ENCODE measurements at regions of chr16 and their contacts with region 1.

Region 1: DNA sequence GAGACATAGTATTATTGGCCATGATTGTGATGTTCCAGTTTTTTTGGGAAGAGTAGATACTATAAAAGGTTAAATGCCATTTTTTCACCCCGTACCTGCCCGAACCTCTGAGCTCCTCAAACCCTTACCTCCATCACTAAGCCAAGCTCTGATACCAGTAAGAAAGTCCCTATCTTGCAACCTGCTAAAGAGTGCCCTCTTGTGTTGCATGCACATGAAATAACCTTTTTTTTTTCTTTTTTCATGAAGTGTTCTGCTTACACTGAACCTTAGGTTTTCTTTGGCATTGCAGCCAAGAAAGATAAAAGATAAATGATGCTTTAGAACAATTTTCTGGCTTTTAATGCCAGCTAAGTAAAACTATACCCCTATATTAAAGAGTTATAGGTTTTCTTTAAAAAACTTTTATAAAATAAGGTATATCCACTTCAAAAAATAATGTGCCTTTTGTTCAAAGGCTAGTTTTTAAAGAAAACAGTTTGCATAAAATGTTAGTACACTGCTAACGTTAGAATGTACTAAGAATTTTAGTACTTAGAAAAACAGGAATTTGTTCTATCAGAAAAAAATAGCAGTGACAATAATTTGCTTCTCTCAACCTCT is 295.3 kb upstream of the PMFBP1 start:
- DNase-seq: no peak
- ATAC-seq: peak; percentile 62 to 80 (median 68)
- H3K4me3 ChIP-seq: no peak overlapping the region
- H3K27ac ChIP-seq: no peak overlapping the region
- H3K4me1 ChIP-seq: no peaks in the 10 kb centered on the region
- H3K27me3 ChIP-seq: no peaks in the 10 kb centered on the region
- CTCF ChIP-seq: peak; percentile 37 to 61 (median 56)
- POLR2A ChIP-seq: no peak

Region 2: DNA sequence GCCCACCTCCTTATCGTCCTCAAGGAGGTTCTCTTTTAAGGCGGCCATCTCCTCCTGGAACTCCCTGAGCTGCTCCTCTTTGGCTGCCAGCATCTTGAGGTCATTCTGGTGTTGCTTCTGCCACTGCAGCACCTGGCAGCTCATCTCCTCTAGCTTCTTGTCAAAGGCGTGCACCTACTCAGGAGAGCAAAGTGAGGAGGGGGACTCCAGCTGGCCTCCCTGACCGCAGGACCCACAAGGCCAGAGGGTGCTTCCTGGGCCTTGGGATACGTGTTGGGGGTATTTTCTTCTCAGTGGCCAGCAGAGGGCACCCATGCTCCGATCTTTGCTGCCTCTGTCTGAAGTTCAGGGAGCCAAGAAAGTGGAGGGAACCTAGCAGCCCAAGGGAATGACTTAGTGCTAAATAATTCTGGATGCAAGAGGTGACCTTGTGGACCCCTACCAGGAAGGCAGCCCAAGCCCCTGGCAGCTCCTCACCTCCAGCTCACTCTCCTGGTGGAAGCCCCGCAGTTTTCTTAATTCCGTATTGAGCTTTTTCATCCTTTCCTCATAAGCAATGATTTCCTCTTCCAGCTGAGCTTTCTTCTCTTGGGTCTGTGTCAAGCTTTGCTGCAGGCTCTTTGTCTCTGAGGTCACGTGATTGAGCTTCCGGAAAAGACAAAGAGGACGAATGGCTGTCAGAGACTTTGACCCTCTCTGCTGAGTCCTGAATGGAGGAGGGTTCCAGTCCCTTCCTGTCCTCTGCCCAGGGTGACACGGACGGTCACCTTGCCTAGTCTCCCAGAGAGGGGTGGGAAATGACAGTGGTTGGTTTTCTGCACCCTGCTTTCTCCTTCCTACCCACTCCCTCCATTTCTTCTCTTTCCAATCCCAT is 342.3 kb before region 1 on chr16:
- intact Hi-C with region 1: loop called (anchors 10 kb)
- DNase-seq: peak; percentile 67 to 75 (median 71)
- ATAC-seq: peak; percentile 87 to 96 (median 90)
- H3K4me3 ChIP-seq: no peak overlapping the region
- H3K27ac ChIP-seq: no peak overlapping the region
- H3K4me1 ChIP-seq: peaks cover 0 to 10% (median 3%) of the 10 kb centered on the region in 4 donors
- H3K27me3 ChIP-seq: no peaks in the 10 kb centered on the region
- CTCF ChIP-seq: peak; percentile 64 to 83 (median 78)
- POLR2A ChIP-seq: no peak

Region 3: GRCh38 chr16:72576189-72576588 is 108.9 kb after region 1 on chr16:
- intact Hi-C with region 1: no loop called
- DNase-seq: no peak
- ATAC-seq: no peak
- H3K4me3 ChIP-seq: no peak overlapping the region
- H3K27ac ChIP-seq: no peak overlapping the region
- H3K4me1 ChIP-seq: no peaks in the 10 kb centered on the region
- H3K27me3 ChIP-seq: no peaks in the 10 kb centered on the region
- CTCF ChIP-seq: no peak
- POLR2A ChIP-seq: no peak

Measured in right lobe of liver (tissue), 6 donors.